Kidney (tissue), 22 donors: ENCODE measurements at regions of chr15 and their contacts with region 1.

Region 1: GRCh38 chr15:27017168-27017809 is 46.3 kb downstream of the GABRG3 start:
- DNase-seq: peak in 4 of 5 donors; percentile 70 to 82 (median 81)
- H3K4me3 ChIP-seq: no peak overlapping the region
- H3K27ac ChIP-seq: no peak overlapping the region
- H3K4me1 ChIP-seq: no peaks in the 10 kb centered on the region
- H3K27me3 ChIP-seq: no peaks in the 10 kb centered on the region
- CTCF ChIP-seq: peak; percentile 76

Region 2: GRCh38 chr15:26891448-26892181 is 125.7 kb before region 1 on chr15:
- intact Hi-C with region 1: loop called (anchors 10 kb)
- DNase-seq: peak; percentile 75 to 93 (median 89)
- H3K4me3 ChIP-seq: peak overlapping the region; percentile 8 to 55 (median 51)
- H3K27ac ChIP-seq: no peak overlapping the region
- H3K4me1 ChIP-seq: peaks cover 0 to 5% (median 0%) of the 10 kb centered on the region in 3 donors
- H3K27me3 ChIP-seq: peaks cover 3% of the 10 kb centered on the region
- CTCF ChIP-seq: peak; percentile 67

Region 3: GRCh38 chr15:26950001-26950400 is 67.3 kb before region 1 on chr15:
- intact Hi-C with region 1: no loop called
- DNase-seq: no peak
- H3K4me3 ChIP-seq: no peak overlapping the region
- H3K27ac ChIP-seq: no peak overlapping the region
- H3K4me1 ChIP-seq: no peaks in the 10 kb centered on the region
- H3K27me3 ChIP-seq: no peaks in the 10 kb centered on the region
- CTCF ChIP-seq: no peak

Region 4: DNA sequence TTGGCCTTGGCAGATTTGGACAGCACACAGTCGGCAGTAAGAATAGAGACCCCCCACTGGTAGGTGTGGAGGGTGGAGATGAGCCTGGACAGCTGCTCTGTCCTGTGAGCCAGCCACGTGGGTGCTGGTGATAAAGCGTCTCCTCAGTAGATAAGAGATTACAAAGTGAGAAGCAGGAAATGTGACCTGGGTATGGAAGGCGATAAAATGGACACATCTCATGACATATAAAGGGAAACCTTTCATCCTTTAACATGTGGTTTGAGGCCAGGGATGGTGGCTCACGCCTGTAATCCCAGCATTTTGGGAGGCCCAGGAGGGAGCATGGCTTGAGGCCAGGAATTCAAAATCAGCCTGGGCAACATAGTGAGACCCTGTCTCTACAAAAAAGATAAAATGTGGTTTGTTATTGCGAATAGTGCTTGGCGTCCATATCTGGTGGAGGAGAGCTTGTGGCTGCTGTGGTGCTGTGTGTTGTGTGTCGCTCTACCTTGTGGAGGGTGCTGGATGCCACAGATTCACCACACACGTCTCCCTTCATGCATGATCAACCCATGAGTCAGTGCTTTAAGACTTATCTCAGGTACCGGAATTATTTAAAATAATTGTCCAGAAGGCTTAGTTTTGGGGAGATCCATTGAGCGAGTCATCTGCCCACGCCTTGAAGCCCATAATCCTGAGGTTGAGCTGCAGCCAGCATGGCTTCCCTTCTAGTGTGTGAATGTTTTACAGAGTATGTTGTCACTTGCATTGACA is 110.7 kb after region 1 on chr15:
- intact Hi-C with region 1: no loop called
- DNase-seq: no peak
- H3K4me3 ChIP-seq: no peak overlapping the region
- H3K27ac ChIP-seq: no peak overlapping the region
- H3K4me1 ChIP-seq: no peaks in the 10 kb centered on the region
- H3K27me3 ChIP-seq: no peaks in the 10 kb centered on the region
- CTCF ChIP-seq: no peak